AG04449 (cell line): ENCODE measurements at regions of chr18 and their contacts with region 1.

Region 1: GRCh38 chr18:45865466-45865865 is 40.0 kb downstream of the SIGLEC15 start:
- DNase-seq: no peak
- H3K4me3 ChIP-seq: no peak overlapping the region
- CTCF ChIP-seq: no peak

Region 2: DNA sequence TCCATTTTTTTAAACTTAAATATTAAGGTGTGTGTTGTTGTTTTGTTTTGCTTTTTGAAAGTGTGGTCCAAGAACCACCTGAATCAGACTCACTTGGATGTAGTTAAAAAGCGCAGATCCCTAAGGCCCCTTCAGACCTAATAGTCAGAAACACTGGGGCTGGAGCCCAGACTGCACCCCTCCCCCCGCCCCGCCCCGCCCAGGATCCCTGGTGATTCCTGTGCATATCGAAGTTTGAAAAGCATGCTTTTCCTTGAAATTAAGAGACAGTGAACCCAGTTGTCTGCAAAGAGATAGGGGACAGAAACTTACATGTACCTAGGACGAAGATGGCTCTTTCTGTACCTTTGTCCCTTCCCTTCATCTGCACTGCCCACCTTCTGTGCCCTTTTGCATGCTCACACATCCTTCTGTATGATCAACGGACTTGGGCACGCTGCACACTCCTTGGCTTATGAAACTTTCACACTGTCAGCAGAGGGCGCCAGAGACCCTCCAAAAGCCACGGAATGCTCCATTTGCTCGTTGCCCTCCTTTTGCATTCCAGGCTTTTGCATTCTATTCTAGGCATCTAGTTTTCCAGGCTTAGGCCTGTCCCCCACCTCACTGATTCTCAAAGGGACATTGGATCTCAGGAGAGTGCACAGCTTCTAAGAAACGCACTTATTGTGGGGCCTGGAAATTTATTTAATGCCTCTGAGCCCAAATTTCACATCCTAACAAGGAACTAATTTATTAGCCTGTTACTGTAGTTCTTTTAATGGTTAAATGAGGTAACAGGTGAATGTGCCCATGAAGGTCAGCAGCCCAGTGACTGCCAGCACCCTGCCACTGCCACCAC is 174.3 kb before region 1 on chr18:
- CTCF ChIA-PET with region 1: interaction called, 14 read pairs
- POLR2A ChIA-PET with region 1: no interaction called
- DNase-seq: no peak
- H3K4me3 ChIP-seq: 0 out of 2 replicates have a peak overlapping the region, but pooled peaks have one; percentile 3
- CTCF ChIP-seq: peak; percentile 89

Region 3: GRCh38 chr18:45890606-45891005 is 25.1 kb after region 1 on chr18:
- CTCF ChIA-PET with region 1: no interaction called
- POLR2A ChIA-PET with region 1: no interaction called
- DNase-seq: no peak
- H3K4me3 ChIP-seq: no peak overlapping the region
- CTCF ChIP-seq: no peak

Region 4: DNA sequence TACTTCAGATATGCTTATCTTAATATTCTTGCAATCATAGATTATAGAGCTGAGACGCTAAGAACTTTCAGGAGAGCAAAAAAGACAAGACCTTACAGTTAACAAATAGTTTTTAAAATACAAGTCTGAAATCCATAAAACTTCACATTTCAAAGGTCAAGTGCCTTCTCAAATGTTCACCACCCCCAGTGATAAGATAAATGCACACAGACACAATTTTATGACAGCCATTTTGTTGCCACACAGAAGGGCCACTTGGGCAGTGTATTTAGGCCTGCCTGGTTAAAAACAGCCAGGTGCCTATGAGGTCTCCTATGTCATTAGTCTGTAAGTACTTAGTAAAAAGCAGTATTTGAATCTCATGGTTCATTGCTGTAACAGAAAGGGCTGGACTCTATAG is 214.7 kb after region 1 on chr18:
- CTCF ChIA-PET with region 1: no interaction called
- POLR2A ChIA-PET with region 1: no interaction called
- DNase-seq: no peak
- H3K4me3 ChIP-seq: no peak overlapping the region
- CTCF ChIP-seq: no peak